ENCODE measurements at regions of chr1 and their contacts with region 1.

Region 1: DNA sequence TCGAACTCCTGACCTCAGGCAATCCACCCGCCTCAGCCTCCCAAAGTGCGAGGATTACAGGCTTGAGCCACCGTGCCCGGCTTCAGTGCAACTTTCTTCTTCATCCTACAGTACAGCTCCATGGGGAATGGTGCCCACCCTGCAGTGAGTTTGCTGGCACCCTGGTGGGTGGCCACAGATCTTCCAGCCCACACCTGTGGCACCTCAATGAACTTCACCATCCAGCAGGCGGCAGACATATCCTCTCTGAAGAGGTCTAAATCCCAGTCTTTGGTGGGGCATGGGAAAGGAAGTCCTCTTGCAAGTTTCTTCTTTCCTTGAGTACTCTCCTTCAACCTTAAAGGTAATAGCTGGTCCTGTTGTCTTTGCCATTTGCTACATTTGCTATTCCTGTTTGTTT is 18.1 kb upstream of the ZBTB8A start:
- DNase-seq: no peak
- H3K4me3 ChIP-seq: peak overlapping the region; percentile 62; the same call in 1 of the 2 replicates
- H3K27ac ChIP-seq: no peak overlapping the region
- H3K4me1 ChIP-seq: peaks cover 6% of the 10 kb centered on the region; the same call in 1 of the 2 replicates
- H3K27me3 ChIP-seq: no peaks in the 10 kb centered on the region
- CTCF ChIP-seq: no peak

Region 2: DNA sequence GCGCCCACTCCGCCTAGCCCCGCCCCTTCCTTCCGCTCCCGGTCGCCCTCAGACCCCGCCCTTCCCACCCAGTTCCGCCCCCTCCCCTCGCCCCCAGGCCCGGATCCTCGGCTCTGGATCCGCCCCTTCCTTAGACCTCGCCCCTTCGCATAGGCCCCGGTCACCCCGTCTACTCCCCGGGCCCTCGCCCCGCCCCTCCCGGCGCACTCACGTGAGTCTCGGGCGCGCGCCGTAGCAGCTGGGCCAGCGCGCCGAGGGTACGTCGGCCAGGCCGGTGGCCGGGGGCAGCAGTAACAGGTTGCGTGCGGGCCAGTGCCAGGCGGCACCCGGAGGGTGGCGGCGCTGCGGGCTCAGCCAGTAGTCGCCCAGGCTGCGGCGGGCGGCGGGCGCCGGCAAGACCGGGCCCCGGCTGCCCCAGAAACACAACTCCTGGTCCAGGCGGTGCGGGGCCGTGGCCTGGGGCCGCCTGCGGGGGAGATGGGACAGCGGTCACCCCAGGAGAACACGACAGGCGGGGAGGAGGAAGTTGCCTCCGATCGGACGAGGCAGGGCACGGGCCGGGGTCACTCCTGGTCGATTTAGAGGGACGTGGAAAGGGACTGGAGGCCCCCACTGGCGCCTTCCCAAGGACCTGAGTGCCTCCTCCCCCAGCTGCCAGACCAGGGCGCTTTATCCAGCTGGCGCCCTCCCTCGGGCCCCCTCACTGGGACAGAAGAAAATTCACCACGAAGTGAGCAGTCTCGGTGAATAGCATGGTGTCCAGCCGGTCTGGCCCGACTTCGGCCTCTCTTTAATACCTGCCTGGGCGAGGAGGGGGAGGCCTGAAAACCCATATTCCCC is 169.5 kb before region 1 on chr1:
- CTCF ChIA-PET with region 1: interaction called, 14 read pairs
- POLR2A ChIA-PET with region 1: no interaction called
- intact Hi-C with region 1: no loop called
- DNase-seq: peak; percentile 76 to 91
- H3K4me3 ChIP-seq: peak overlapping the region; percentile 74
- H3K27ac ChIP-seq: peak overlapping the region; percentile 67
- H3K4me1 ChIP-seq: peaks cover 14% of the 10 kb centered on the region; the same call in 1 of the 2 replicates
- H3K27me3 ChIP-seq: no peaks in the 10 kb centered on the region
- CTCF ChIP-seq: no peak

Region 3: DNA sequence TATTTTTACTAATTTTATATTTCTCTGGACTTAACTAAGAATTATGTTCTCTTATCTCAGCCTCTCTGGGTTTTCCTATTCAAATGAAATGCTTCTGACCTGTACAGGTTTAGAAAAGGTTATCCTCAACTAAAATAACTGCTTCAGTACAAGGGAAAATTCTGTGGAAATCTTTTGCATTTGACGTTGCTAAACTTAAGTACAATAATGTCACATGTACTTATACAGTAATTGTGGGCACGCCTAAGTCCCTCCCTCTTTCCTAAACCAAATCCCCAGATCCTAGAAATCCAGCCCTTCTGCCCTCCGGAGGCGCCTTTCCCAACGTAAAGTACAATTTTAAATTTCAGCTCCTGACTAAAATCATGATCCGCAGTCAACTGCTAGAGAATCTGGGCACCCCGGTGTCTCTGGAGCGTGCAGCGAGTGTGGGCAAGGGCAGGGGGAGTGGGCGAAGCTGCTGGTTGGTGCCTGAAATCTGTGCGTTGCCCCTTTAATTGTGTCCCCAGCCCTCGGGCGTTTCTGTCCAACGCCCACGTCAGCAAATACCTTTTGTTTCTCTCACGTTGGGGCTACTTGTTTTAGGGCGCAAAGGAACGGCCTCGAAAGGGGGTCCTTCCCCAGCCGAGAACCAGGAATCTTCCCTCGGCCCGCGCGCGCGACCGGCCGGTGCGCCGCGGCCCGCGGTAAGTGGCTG is 17.9 kb after region 1 on chr1 and contains the start of gene ZBTB8A:
- CTCF ChIA-PET with region 1: interaction called, 10 read pairs
- POLR2A ChIA-PET with region 1: no interaction called
- intact Hi-C with region 1: no loop called
- DNase-seq: peak; percentile 48 to 56
- H3K4me3 ChIP-seq: peak within 1 kb of the TSS; percentile 68
- H3K27ac ChIP-seq: no peak within 1 kb of the TSS
- H3K4me1 ChIP-seq: peaks cover 10% of the 10 kb centered on the region; the same call in 1 of the 2 replicates
- H3K27me3 ChIP-seq: no peaks in the 10 kb centered on the region
- CTCF ChIP-seq: no peak
- total RNA-seq, gene ZBTB8A: 4.2 and 4.3 TPM in 2 replicates

Region 4: DNA sequence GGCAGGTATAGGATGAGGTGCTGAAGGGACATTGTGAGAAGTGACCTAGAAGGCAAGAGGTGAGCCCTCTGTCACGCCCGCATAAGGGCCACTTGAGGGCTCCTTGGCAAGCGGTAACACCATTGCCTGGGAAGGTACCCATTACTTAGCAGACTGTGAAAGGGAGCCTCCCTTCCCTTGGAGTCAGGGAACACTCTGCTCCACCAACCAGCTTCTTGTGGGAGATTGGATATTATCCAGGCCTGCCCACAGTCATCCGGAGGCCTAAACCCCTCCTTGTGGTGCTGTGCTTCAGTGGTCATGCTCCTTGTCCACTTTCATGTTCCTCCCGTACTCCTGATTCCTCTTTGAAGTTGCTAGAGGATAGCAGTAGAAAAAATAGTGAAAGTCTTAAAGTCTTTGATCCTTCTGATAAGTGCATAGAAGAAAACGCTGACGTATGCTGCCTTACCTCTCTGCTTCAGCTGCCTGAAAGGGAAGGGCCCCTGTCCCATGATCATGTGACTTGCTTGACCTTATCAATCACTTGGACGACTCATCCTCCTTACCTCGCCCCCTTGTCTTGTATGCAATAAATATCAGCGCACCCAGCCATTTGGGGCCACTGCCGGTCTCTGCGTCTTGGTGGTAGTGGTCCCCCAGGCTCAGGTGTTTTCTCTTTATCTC is 145.9 kb after region 1 on chr1:
- CTCF ChIA-PET with region 1: interaction called, 15 read pairs
- POLR2A ChIA-PET with region 1: no interaction called
- intact Hi-C with region 1: no loop called
- DNase-seq: no peak
- H3K4me3 ChIP-seq: no peak overlapping the region
- H3K27ac ChIP-seq: no peak overlapping the region
- H3K4me1 ChIP-seq: no peaks in the 10 kb centered on the region
- H3K27me3 ChIP-seq: no peaks in the 10 kb centered on the region
- CTCF ChIP-seq: no peak

Region 5: GRCh38 chr1:32876341-32877210 is 355.4 kb after region 1 on chr1:
- CTCF ChIA-PET with region 1: interaction called, 4 read pairs
- POLR2A ChIA-PET with region 1: no interaction called
- intact Hi-C with region 1: loop called (anchors 2 kb)
- DNase-seq: peak in 1 of 2 experiments; percentile 61
- H3K4me3 ChIP-seq: no peak overlapping the region
- H3K27ac ChIP-seq: no peak overlapping the region
- H3K4me1 ChIP-seq: no peaks in the 10 kb centered on the region
- H3K27me3 ChIP-seq: peaks cover 6% of the 10 kb centered on the region; the same call in 1 of the 2 replicates
- CTCF ChIP-seq: peak; percentile 91